GM12878 (cell line): ENCODE measurements at regions of chr21 and their contacts with region 1.

Region 1: DNA sequence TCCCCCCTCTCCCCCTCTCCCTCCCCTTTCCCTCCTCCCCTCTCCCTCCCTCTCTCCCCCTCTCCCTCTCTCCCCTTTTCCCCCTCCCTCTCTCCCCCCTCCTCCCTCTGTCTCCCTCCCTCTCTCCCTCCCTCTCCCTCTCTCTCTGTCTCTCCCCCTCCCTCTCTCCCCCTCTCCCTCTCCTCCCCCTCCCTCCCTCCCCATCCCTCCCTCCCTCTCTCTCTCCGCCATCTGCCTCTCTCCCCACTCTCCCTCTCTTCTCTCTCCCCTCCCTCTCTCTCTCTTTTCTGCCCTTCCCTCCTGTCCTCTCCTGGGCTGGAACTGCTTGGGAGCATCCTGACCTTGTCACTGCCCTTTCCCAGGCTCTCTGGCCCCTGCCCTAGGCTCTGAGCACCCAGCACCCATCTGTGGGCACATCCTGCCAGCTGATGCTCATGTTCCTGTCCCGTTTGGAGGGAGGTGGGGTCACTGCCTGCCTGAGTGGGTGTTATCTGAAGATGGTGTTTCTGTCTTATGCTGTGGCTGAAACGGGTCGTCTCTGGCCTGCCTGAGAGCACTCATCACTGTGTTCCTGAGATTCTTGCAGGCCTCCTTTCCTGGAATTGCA is 10.8 kb downstream of the FTCD start:
- DNase-seq: no peak
- ATAC-seq: no peak
- H3K4me3 ChIP-seq: no peak overlapping the region
- H3K27ac ChIP-seq: no peak overlapping the region
- H3K4me1 ChIP-seq: no peaks in the 10 kb centered on the region; the same call in 1 of the 2 replicates
- H3K27me3 ChIP-seq: no peaks in the 10 kb centered on the region
- CTCF ChIP-seq: no peak
- EP300 ChIP-seq: no peak
- POLR2A ChIP-seq: no peak
- RAD21 ChIP-seq: no peak

Region 2: GRCh38 chr21:45973659-45974072 is 170.9 kb before region 1 on chr21:
- CTCF ChIA-PET with region 1: interaction called, 19 read pairs
- POLR2A ChIA-PET with region 1: interaction called, 5 read pairs
- RAD21 ChIA-PET with region 1: interaction called, 7 read pairs
- SMC1A ChIA-PET with region 1: interaction called, 6 read pairs
- in situ Hi-C with region 1: no loop called
- intact Hi-C with region 1: loop called (anchors 5 kb)
- DNase-seq: no peak
- ATAC-seq: peak; percentile 81
- H3K4me3 ChIP-seq: no peak overlapping the region
- H3K27ac ChIP-seq: no peak overlapping the region
- H3K4me1 ChIP-seq: peaks cover 8% of the 10 kb centered on the region
- H3K27me3 ChIP-seq: peaks cover 5 to 7% of the 10 kb centered on the region in 2 experiments; a peak in 3 of 4 replicates
- CTCF ChIP-seq: peak; percentile 64 to 69 (median 65)
- EP300 ChIP-seq: no peak
- POLR2A ChIP-seq: peak; percentile 27; the same call in 1 of the 2 replicates
- RAD21 ChIP-seq: peak; percentile 34; the same call in 1 of the 2 replicates

Region 3: DNA sequence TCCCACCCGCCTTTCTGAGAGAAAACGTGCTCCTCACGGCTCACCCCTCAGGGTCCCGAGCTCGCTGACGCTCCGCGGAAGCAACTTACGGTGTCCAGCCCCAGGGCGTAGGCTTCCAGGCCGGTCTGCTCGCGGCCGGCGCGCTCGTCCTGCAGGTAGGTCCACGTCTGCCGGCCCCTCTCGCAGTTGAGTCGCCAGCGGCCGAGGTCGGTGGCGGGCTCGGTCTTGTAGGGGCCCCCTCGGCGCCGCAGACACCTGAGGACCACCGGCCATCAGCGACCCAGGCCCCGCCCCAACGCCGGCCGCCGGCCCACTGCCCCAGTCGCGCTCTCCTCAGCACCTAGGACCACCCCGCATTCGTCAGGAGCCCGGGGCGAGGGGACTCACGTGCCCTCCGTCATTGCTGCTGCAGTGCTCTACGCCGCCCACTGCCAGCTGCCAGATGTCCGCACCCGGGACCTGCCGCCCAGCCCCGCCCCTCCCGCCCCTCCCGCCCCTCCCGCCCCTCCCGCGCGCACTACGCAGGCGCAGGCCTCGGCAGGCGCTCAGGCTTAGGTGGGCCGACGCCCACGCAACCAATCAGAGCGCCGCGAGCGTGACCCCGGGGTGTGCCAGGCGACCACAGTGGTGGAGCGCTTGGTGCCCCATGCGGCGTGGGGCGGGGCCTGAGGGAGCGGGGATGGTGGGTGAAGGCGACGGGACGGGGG is 83.9 kb after region 1 on chr21 and contains the start of gene LSS:
- CTCF ChIA-PET with region 1: interaction called, 34 read pairs
- POLR2A ChIA-PET with region 1: interaction called, 3 read pairs
- RAD21 ChIA-PET with region 1: interaction called, 7 read pairs
- SMC1A ChIA-PET with region 1: interaction called, 4 read pairs
- in situ Hi-C with region 1: no loop called
- intact Hi-C with region 1: loop called (anchors 5 kb)
- DNase-seq: peak; percentile 83
- ATAC-seq: peak; percentile 90
- H3K4me3 ChIP-seq: peak within 1 kb of the TSS; percentile 81
- H3K27ac ChIP-seq: peak within 1 kb of the TSS; percentile 73
- H3K4me1 ChIP-seq: peaks cover 5% of the 10 kb centered on the region; the same call in 1 of the 2 replicates
- H3K27me3 ChIP-seq: no peaks in the 10 kb centered on the region
- CTCF ChIP-seq: no peak
- EP300 ChIP-seq: no peak
- POLR2A ChIP-seq: peak; percentile 80
- RAD21 ChIP-seq: no peak
- polyA plus RNA-seq, gene LSS: 2.9 to 3.7 TPM

Region 4: GRCh38 chr21:46635324-46636172 is 491.0 kb after region 1 on chr21 and contains the start of gene PRMT2:
- CTCF ChIA-PET with region 1: interaction called, 16 read pairs
- POLR2A ChIA-PET with region 1: no interaction called
- RAD21 ChIA-PET with region 1: interaction called, 3 read pairs
- SMC1A ChIA-PET with region 1: interaction called, 5 read pairs
- in situ Hi-C with region 1: no loop called
- intact Hi-C with region 1: no loop called
- DNase-seq: peak; percentile 86
- ATAC-seq: peak; percentile 94
- H3K4me3 ChIP-seq: peak within 1 kb of the TSS; percentile 83
- H3K27ac ChIP-seq: peak within 1 kb of the TSS; percentile 85
- H3K4me1 ChIP-seq: no peaks in the 10 kb centered on the region
- H3K27me3 ChIP-seq: no peaks in the 10 kb centered on the region
- CTCF ChIP-seq: no peak
- EP300 ChIP-seq: no peak
- POLR2A ChIP-seq: peak; percentile 96
- RAD21 ChIP-seq: no peak
- polyA plus RNA-seq, gene PRMT2: 16.1 to 24.1 TPM